ENCODE measurements at regions of chr5 and their contacts with region 1.

Region 1: GRCh38 chr5:119470851-119471451 is 18.7 kb downstream of the HSD17B4 start:
- DNase-seq: no peak
- H3K4me3 ChIP-seq: peak overlapping the region in 1 of 59 donors; percentile 8
- H3K27ac ChIP-seq: peak overlapping the region in 8 of 59 donors; percentile 0 to 30 (median 17)
- H3K27me3 ChIP-seq: no peaks in the 10 kb centered on the region
- CTCF ChIP-seq: peak; percentile 42 to 91 (median 76)

Region 2: GRCh38 chr5:119287547-119288073 is 183.3 kb before region 1 on chr5:
- intact Hi-C with region 1: no loop called
- DNase-seq: no peak
- H3K4me3 ChIP-seq: no peak overlapping the region
- H3K27ac ChIP-seq: no peak overlapping the region
- H3K27me3 ChIP-seq: no peaks in the 10 kb centered on the region
- CTCF ChIP-seq: no peak

Region 3: GRCh38 chr5:119426057-119426456 is 44.9 kb before region 1 on chr5:
- intact Hi-C with region 1: no loop called
- DNase-seq: no peak
- H3K4me3 ChIP-seq: no peak overlapping the region
- H3K27ac ChIP-seq: no peak overlapping the region
- H3K27me3 ChIP-seq: no peaks in the 10 kb centered on the region
- CTCF ChIP-seq: no peak

Region 4: GRCh38 chr5:119743927-119744326 is 273.0 kb after region 1 on chr5:
- intact Hi-C with region 1: loop called (anchors 2 to 5 kb)
- DNase-seq: no peak
- H3K4me3 ChIP-seq: no peak overlapping the region
- H3K27ac ChIP-seq: no peak overlapping the region
- H3K27me3 ChIP-seq: no peaks in the 10 kb centered on the region
- CTCF ChIP-seq: peak in 54 of 56 donors; percentile 17 to 71 (median 49)

Region 5: DNA sequence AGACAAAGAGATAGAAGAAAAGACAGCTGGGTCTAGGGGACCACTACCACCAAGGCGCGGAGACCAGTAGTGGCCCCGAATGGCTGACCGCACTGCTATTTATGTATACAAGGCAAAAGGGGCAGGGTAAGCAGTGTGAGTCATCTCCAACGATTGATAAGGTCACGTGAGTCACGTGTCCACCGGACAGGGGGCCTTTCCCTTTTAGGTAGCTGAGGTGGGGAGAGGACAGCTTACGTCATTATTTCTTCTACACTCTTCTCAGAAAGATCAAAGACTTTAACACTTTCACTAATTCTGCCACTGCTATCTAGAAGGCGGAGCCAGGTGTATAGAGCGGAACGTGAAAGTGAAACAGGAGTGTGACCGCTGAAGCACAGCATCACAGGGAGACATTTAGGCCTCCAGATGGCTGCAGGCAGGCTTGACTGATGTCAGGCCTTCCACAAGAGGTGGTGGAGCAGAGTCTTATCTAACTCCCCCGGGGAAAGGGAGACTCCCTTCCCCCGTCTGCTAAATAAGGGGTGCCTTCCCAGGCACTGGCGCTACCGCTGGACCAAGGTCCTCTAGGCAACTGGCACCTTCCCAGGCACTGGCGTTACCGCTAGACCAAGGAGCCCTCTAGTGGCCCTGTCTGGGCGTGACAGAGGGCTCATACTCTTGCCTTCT is 987.0 kb after region 1 on chr5:
- intact Hi-C with region 1: loop called in 1 of 2 experiments (anchors 10 kb)
- DNase-seq: peak in 9 of 10 donors; percentile 26 to 72 (median 51)
- H3K4me3 ChIP-seq: peak overlapping the region in 33 of 59 donors; percentile 7 to 56 (median 36)
- H3K27ac ChIP-seq: no peak overlapping the region
- H3K27me3 ChIP-seq: peaks cover 0 to 3% (median 0%) of the 10 kb centered on the region in 45 donors
- CTCF ChIP-seq: peak in 54 of 56 donors; percentile 26 to 69 (median 56)

Measured in dorsolateral prefrontal cortex (tissue), 120 donors.